Activated T-helper 2 cell treated with anti-CD3 and anti-CD28 coated beads, Interferon-gamma antibody, Interleukin-2, Interleukin-4, amounts not matched to agents 10 μg/mL and 5 μg/mL and 100 μg/mL, durations not matched to agents 14 hours and 24 hours and 36 hours (primary cell): ENCODE measurements at regions of chr1 and their contacts with region 1.

Region 1: DNA sequence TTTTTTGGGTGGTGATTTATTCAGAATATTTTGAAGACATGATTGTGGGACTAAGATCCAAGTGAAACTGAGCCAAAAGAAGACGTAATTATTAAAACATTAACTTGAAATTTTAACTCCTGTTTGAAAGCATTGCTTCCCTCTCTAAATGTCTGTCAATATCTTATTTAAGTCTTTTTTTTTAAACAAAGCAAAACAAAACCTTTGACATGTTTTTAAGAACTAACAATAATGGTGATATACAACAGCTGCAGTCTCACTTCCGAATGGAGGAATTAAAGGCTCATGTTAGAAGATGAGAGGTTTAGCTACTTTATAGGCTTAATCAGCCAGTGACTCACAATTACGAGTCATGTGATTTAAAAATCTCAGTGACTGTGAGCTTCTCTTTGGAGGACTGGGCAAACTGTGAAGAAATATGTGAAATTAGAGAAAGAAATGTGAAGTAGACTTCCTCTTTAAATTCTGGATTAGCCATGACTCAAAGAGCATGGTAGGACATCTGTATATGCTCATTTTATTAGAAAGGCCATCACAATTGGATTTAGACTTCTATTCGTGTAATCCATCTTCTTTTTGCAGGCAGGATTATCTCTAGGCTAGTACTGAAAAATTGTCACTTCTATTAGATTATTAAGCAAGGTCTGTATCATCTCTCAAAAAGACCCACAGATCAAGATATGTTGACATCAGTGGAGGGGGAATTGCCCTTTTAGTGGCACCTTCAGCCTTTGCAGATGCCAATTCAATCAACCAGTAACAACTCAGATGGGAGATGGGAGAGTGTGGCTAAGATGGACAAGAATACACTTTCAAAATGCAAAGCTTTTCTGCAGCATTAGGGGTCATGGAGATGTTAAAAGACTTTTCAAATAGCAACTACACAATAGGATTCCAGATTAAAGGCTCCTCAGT is 28.7 kb downstream of the KCNA3 start:
- DNase-seq: no peak
- H3K4me3 Mint-ChIP-seq: peak overlapping the region; percentile 49
- H3K27ac Mint-ChIP-seq: peak overlapping the region; percentile 77
- H3K4me1 Mint-ChIP-seq: peaks cover 53% of the 10 kb centered on the region
- H3K27me3 Mint-ChIP-seq: no peaks in the 10 kb centered on the region

Region 2: GRCh38 chr1:110657351-110657750 is 11.3 kb after region 1 on chr1:
- intact Hi-C with region 1: loop called (anchors 1 kb)
- DNase-seq: no peak
- H3K4me3 Mint-ChIP-seq: no peak overlapping the region
- H3K27ac Mint-ChIP-seq: no peak overlapping the region
- H3K4me1 Mint-ChIP-seq: peaks cover 27% of the 10 kb centered on the region
- H3K27me3 Mint-ChIP-seq: no peaks in the 10 kb centered on the region